ENCODE measurements at regions of chr6 and their contacts with region 1.

Region 1: GRCh38 chr6:52546678-52547077 is 30.2 kb downstream of the TRAM2 start:
- DNase-seq: no peak
- ATAC-seq: no peak
- H3K4me3 ChIP-seq: no peak overlapping the region
- H3K4me3 Mint-ChIP-seq: no peak overlapping the region
- H3K27ac ChIP-seq: no peak overlapping the region
- H3K27ac Mint-ChIP-seq: no peak overlapping the region
- H3K4me1 ChIP-seq: no peaks in the 10 kb centered on the region
- H3K4me1 Mint-ChIP-seq: peaks cover 32% of the 10 kb centered on the region
- H3K27me3 ChIP-seq: no peaks in the 10 kb centered on the region
- H3K27me3 Mint-ChIP-seq: no peaks in the 10 kb centered on the region
- CTCF ChIP-seq: no peak

Region 2: GRCh38 chr6:51569594-51569993 is 977.1 kb before region 1 on chr6:
- CTCF ChIA-PET with region 1: no interaction called
- POLR2A ChIA-PET with region 1: no interaction called
- intact Hi-C with region 1: no loop called
- DNase-seq: no peak
- ATAC-seq: no peak
- H3K4me3 ChIP-seq: no peak overlapping the region
- H3K4me3 Mint-ChIP-seq: no peak overlapping the region
- H3K27ac ChIP-seq: no peak overlapping the region
- H3K27ac Mint-ChIP-seq: no peak overlapping the region
- H3K4me1 ChIP-seq: no peaks in the 10 kb centered on the region
- H3K4me1 Mint-ChIP-seq: no peaks in the 10 kb centered on the region
- H3K27me3 ChIP-seq: no peaks in the 10 kb centered on the region
- H3K27me3 Mint-ChIP-seq: no peaks in the 10 kb centered on the region
- CTCF ChIP-seq: no peak

Region 3: GRCh38 chr6:52558266-52559000 is 11.8 kb after region 1 on chr6:
- CTCF ChIA-PET with region 1: no interaction called
- POLR2A ChIA-PET with region 1: no interaction called
- intact Hi-C with region 1: no loop called
- DNase-seq: no peak
- ATAC-seq: no peak
- H3K4me3 ChIP-seq: no peak overlapping the region
- H3K4me3 Mint-ChIP-seq: no peak overlapping the region
- H3K27ac ChIP-seq: no peak overlapping the region
- H3K27ac Mint-ChIP-seq: no peak overlapping the region
- H3K4me1 ChIP-seq: no peaks in the 10 kb centered on the region
- H3K4me1 Mint-ChIP-seq: peaks cover 24% of the 10 kb centered on the region
- H3K27me3 ChIP-seq: no peaks in the 10 kb centered on the region
- H3K27me3 Mint-ChIP-seq: no peaks in the 10 kb centered on the region
- CTCF ChIP-seq: no peak

Region 4: DNA sequence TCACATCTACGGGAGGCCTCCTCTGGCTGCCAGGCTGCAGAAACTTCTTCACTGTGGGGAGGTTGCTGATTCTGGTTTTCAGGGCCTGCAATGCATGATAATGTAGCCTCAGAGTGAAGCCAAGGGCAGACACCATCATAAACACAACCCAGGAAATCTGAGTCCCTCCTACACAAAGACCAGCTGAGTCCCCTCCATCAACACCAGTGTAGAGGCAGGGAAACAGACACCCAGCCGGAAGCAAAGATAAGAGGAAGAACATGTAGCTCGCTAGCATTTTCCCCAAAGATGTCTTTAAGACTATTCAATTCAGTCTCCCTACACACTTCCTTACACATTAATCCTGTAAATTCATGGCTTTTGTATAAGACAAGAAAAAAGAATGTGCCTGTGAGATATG is 192.9 kb after region 1 on chr6:
- CTCF ChIA-PET with region 1: no interaction called
- POLR2A ChIA-PET with region 1: no interaction called
- intact Hi-C with region 1: loop called in 1 of 2 experiments (anchors 5 kb)
- DNase-seq: no peak
- ATAC-seq: no peak
- H3K4me3 ChIP-seq: no peak overlapping the region
- H3K4me3 Mint-ChIP-seq: no peak overlapping the region
- H3K27ac ChIP-seq: no peak overlapping the region
- H3K27ac Mint-ChIP-seq: no peak overlapping the region
- H3K4me1 ChIP-seq: no peaks in the 10 kb centered on the region
- H3K4me1 Mint-ChIP-seq: no peaks in the 10 kb centered on the region
- H3K27me3 ChIP-seq: no peaks in the 10 kb centered on the region
- H3K27me3 Mint-ChIP-seq: peaks cover 5% of the 10 kb centered on the region
- CTCF ChIP-seq: no peak

Region 5: DNA sequence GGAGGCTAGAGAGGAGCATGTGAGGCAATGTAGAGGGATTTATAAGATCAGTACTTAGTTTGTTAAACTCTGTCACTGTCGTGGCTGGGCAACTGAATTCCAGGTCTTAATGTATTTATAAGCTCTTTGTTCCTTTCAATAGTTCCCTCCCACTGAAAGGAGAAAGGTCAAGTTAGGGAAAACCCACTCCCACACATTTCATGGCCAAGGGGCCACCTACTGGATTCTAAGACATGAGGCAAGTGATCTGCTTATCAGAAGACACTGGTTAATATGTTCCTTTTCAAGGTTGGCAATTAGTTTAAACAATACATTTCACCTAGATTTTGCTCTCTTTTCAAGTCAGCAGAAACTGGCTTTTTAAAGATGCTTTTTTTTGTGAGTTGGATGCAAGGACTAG is 299.3 kb after region 1 on chr6:
- CTCF ChIA-PET with region 1: no interaction called
- POLR2A ChIA-PET with region 1: no interaction called
- intact Hi-C with region 1: no loop called
- DNase-seq: no peak
- ATAC-seq: no peak
- H3K4me3 ChIP-seq: no peak overlapping the region
- H3K4me3 Mint-ChIP-seq: no peak overlapping the region
- H3K27ac ChIP-seq: no peak overlapping the region
- H3K27ac Mint-ChIP-seq: no peak overlapping the region
- H3K4me1 ChIP-seq: no peaks in the 10 kb centered on the region
- H3K4me1 Mint-ChIP-seq: no peaks in the 10 kb centered on the region
- H3K27me3 ChIP-seq: no peaks in the 10 kb centered on the region
- H3K27me3 Mint-ChIP-seq: peaks cover 15% of the 10 kb centered on the region
- CTCF ChIP-seq: no peak

Measured in CD8-positive, alpha-beta T cell (primary cell).